Activated B cell treated with CpG ODN at 0.5 μM for 24 hours (primary cell): ENCODE measurements at regions of chr16 and their contacts with region 1.

Region 1: GRCh38 chr16:81752225-81752875 is 26.7 kb upstream of the PLCG2 start:
- DNase-seq: peak; percentile 70
- ATAC-seq: peak; percentile 92
- H3K4me3 Mint-ChIP-seq: peak overlapping the region; percentile 46
- H3K27ac Mint-ChIP-seq: peak overlapping the region; percentile 82
- H3K4me1 Mint-ChIP-seq: peaks cover 82% of the 10 kb centered on the region
- H3K27me3 Mint-ChIP-seq: no peaks in the 10 kb centered on the region
- CTCF ChIP-seq: no peak

Region 2: DNA sequence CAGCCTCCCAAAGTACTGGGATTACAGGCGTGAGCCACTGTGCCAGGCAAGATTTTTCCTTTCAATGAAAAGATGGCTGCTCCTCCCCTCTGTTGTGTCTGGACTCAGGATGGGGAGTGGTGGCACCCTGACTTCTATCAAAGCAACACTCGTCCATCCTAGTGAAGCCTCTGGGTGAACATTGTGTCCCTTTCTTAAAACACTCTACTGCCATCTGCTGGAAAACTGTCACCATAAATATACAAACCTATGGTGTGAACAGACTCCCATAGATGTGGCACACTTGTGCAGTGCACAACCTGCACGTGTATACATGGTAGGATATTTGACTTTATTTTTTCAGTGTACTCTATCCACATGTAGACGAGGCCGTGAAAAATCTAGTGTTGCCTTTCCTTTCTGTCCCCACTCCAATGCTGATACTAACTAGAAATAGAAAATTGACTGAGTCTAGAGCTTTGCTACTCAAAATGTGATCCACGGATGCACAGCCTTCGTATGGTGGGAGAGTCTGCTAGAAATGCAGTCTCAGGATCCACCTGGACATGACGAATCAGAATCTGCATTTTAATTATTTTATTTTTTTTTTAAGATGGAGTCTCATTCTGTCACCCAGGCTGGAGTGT is 29.1 kb before region 1 on chr16:
- CTCF ChIA-PET with region 1: no interaction called
- POLR2A ChIA-PET with region 1: no interaction called
- intact Hi-C with region 1: no loop called
- DNase-seq: no peak
- ATAC-seq: peak; percentile 92
- H3K4me3 Mint-ChIP-seq: no peak overlapping the region
- H3K27ac Mint-ChIP-seq: no peak overlapping the region
- H3K4me1 Mint-ChIP-seq: peaks cover 22% of the 10 kb centered on the region
- H3K27me3 Mint-ChIP-seq: peaks cover 1% of the 10 kb centered on the region
- CTCF ChIP-seq: no peak

Region 3: DNA sequence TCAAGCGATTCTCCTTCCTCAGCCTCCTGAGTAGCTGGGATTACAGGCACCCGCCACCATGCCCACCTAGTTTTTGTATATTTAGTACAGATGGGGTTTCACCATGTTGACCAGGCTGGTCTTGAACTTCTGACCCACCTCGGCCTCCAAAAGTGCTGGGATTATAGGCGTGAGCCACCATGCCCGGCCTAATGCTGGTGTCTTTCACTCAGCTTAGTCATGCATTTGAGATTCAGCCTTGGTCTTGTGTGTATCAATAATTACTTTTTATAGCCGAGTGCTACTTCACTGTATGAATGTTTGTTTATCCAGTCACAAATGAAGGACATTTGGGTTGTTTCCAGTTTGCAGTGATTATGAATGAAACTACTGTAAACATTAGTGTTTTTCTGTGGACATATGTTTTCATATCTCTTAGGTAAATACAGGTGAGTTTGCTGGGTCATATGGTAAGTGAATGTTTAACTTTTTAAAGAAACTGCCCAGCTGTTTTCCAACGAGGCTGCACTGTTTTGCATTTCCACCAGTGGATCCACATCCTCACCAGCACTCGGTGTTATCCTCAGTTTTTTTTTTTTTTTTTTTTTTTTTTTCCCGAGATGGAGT is 15.7 kb after region 1 on chr16:
- CTCF ChIA-PET with region 1: interaction called, 4 read pairs
- POLR2A ChIA-PET with region 1: interaction called, 20 read pairs
- intact Hi-C with region 1: loop called (anchors 1 kb)
- DNase-seq: no peak
- ATAC-seq: no peak
- H3K4me3 Mint-ChIP-seq: no peak overlapping the region
- H3K27ac Mint-ChIP-seq: no peak overlapping the region
- H3K4me1 Mint-ChIP-seq: peaks cover 48% of the 10 kb centered on the region
- H3K27me3 Mint-ChIP-seq: no peaks in the 10 kb centered on the region
- CTCF ChIP-seq: no peak